CD4-positive, alpha-beta T cell (primary cell): ENCODE measurements at regions of chr11 and their contacts with region 1.

Region 1: DNA sequence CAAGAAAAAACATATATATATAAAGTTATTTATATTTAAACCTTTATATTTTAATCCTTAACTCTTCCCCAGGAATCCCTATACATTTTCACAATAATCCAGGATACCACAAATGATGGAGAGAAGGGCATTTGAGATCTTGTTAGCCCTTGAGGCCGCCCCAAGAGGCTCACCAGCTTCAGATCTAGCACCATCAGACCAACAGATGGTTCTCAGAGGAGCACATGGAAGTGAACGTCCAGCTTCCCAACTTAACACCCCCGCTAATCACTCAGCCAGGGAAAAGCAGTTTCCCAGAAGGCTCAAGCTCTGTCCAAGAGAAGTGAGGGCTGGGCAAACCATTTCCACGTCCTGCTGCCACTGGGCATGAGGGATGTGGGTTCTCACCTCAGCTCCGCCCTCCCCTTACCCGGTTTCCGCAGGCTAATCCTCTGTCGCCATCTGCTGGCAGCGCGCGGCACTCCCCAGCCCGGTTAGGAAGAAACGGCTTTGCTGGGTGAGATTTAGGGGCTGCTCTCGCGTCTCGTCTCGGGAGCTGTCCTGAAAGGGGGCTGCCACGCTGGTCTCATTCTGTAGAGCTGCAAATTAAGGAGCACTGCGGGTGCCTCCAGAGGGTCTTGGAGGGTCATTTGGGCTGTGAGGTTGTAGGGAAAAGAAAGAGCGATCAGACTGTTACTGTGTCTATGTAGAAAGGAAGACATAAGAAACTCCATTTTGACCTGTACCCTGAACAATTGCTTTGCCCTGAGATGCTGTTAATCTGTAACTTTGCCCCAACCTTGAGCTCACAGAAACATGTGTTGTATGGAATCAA is 6.8 kb upstream of the FAM111A start:
- DNase-seq: peak; percentile 80 to 92 (median 87)
- ATAC-seq: peak; percentile 100
- H3K4me3 ChIP-seq: no peak overlapping the region
- H3K4me3 Mint-ChIP-seq: peak overlapping the region; percentile 75
- H3K27ac ChIP-seq: no peak overlapping the region
- H3K27ac Mint-ChIP-seq: no peak overlapping the region
- H3K4me1 ChIP-seq: peaks cover 7% of the 10 kb centered on the region
- H3K4me1 Mint-ChIP-seq: peaks cover 8% of the 10 kb centered on the region
- H3K27me3 ChIP-seq: no peaks in the 10 kb centered on the region
- H3K27me3 Mint-ChIP-seq: no peaks in the 10 kb centered on the region
- CTCF ChIP-seq: peak; percentile 98

Region 2: DNA sequence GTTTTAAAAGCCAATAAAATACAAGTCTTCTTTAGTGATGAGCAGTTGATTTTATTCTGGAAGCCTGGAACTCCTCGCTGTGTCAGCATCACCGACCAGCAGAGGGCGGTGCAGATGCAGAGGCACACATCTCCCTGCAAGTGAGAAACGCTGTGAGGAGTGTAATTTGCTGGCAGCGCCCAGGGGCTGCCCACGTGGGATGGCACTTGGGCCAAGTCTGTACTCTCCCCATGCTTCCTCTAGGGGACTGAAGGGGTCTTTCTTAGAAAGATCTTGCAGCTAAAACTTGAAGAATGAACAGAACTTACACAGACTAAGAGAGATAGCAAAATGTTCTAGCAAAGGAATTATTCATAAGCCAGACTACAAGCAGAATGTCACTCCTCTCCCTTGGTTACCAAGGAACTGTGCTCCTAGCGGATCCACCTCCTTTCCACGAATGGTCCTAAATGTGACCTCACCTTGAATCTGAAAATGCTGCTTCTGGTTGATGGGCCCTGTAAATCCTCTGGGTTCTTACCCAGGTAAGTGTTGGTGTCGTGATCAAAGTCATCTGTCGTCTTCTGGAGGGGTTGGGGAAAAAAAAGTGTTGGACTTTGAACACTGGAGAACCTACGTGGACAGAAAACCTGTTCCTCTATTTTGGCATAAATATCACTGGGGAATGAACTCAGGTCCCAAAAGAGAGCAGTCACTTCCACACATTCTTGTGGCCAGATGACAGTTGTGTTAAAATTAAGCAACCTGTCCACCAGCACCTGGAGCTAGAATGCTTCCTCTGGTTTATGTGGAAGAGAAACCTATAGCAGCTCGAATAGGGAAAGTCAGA is 481.6 kb before region 1 on chr11:
- CTCF ChIA-PET with region 1: interaction called, 6 read pairs
- POLR2A ChIA-PET with region 1: no interaction called
- intact Hi-C with region 1: loop called (anchors 1 to 5 kb)
- DNase-seq: peak; percentile 64 to 86 (median 70)
- ATAC-seq: peak; percentile 99
- H3K4me3 ChIP-seq: no peak overlapping the region
- H3K4me3 Mint-ChIP-seq: no peak overlapping the region
- H3K27ac ChIP-seq: no peak overlapping the region
- H3K27ac Mint-ChIP-seq: no peak overlapping the region
- H3K4me1 ChIP-seq: peaks cover 3% of the 10 kb centered on the region
- H3K4me1 Mint-ChIP-seq: peaks cover 7% of the 10 kb centered on the region
- H3K27me3 ChIP-seq: no peaks in the 10 kb centered on the region
- H3K27me3 Mint-ChIP-seq: no peaks in the 10 kb centered on the region
- CTCF ChIP-seq: peak; percentile 96

Region 3: GRCh38 chr11:58813693-58814092 is 322.2 kb before region 1 on chr11:
- CTCF ChIA-PET with region 1: no interaction called
- POLR2A ChIA-PET with region 1: no interaction called
- intact Hi-C with region 1: no loop called
- DNase-seq: no peak
- ATAC-seq: no peak
- H3K4me3 ChIP-seq: no peak overlapping the region
- H3K4me3 Mint-ChIP-seq: no peak overlapping the region
- H3K27ac ChIP-seq: no peak overlapping the region
- H3K27ac Mint-ChIP-seq: no peak overlapping the region
- H3K4me1 ChIP-seq: no peaks in the 10 kb centered on the region
- H3K4me1 Mint-ChIP-seq: no peaks in the 10 kb centered on the region
- H3K27me3 ChIP-seq: no peaks in the 10 kb centered on the region
- H3K27me3 Mint-ChIP-seq: peaks cover 7% of the 10 kb centered on the region
- CTCF ChIP-seq: no peak

Region 4: GRCh38 chr11:58994171-58994570 is 141.7 kb before region 1 on chr11:
- CTCF ChIA-PET with region 1: no interaction called
- POLR2A ChIA-PET with region 1: no interaction called
- intact Hi-C with region 1: no loop called
- DNase-seq: no peak
- ATAC-seq: no peak
- H3K4me3 ChIP-seq: no peak overlapping the region
- H3K4me3 Mint-ChIP-seq: no peak overlapping the region
- H3K27ac ChIP-seq: no peak overlapping the region
- H3K27ac Mint-ChIP-seq: no peak overlapping the region
- H3K4me1 ChIP-seq: no peaks in the 10 kb centered on the region
- H3K4me1 Mint-ChIP-seq: no peaks in the 10 kb centered on the region
- H3K27me3 ChIP-seq: peaks cover 3 to 6% of the 10 kb centered on the region in 2 experiments
- H3K27me3 Mint-ChIP-seq: peaks cover 44% of the 10 kb centered on the region
- CTCF ChIP-seq: no peak

Region 5: GRCh38 chr11:59053387-59053786 is 82.5 kb before region 1 on chr11:
- CTCF ChIA-PET with region 1: interaction called, 17 read pairs
- POLR2A ChIA-PET with region 1: interaction called, 3 read pairs
- intact Hi-C with region 1: loop called (anchors 1 kb)
- DNase-seq: peak; percentile 68 to 88 (median 76)
- ATAC-seq: peak; percentile 68
- H3K4me3 ChIP-seq: no peak overlapping the region
- H3K4me3 Mint-ChIP-seq: no peak overlapping the region
- H3K27ac ChIP-seq: no peak overlapping the region
- H3K27ac Mint-ChIP-seq: no peak overlapping the region
- H3K4me1 ChIP-seq: peaks cover 6% of the 10 kb centered on the region
- H3K4me1 Mint-ChIP-seq: peaks cover 7% of the 10 kb centered on the region
- H3K27me3 ChIP-seq: no peaks in the 10 kb centered on the region
- H3K27me3 Mint-ChIP-seq: peaks cover 28% of the 10 kb centered on the region
- CTCF ChIP-seq: peak; percentile 78

Region 6: GRCh38 chr11:59106363-59107336 is 29.2 kb before region 1 on chr11 and contains the start of gene FAM111B:
- CTCF ChIA-PET with region 1: interaction called, 28 read pairs
- POLR2A ChIA-PET with region 1: interaction called, 6 read pairs
- intact Hi-C with region 1: no loop called
- DNase-seq: peak; percentile 16 to 85 (median 48)
- ATAC-seq: peak; percentile 82
- H3K4me3 ChIP-seq: peak within 1 kb of the TSS; percentile 68
- H3K4me3 Mint-ChIP-seq: peak within 1 kb of the TSS; percentile 92
- H3K27ac ChIP-seq: no peak within 1 kb of the TSS
- H3K27ac Mint-ChIP-seq: peak within 1 kb of the TSS; percentile 72
- H3K4me1 ChIP-seq: peaks cover 29% of the 10 kb centered on the region
- H3K4me1 Mint-ChIP-seq: peaks cover 38% of the 10 kb centered on the region
- H3K27me3 ChIP-seq: peaks cover 0 to 7% of the 10 kb centered on the region in 2 experiments
- H3K27me3 Mint-ChIP-seq: peaks cover 31% of the 10 kb centered on the region
- CTCF ChIP-seq: no peak
- total RNA-seq, gene FAM111B: 0.82 to 1.2 TPM